Ascending aorta (tissue), 2 donors: ENCODE measurements at regions of chr1 and their contacts with region 1.

Region 1: GRCh38 chr1:153670859-153671627 is at the start of gene ILF2:
- DNase-seq: peak; percentile 90 to 99
- H3K4me3 ChIP-seq: peak within 1 kb of the TSS; percentile 79 to 81
- H3K27ac ChIP-seq: peak within 1 kb of the TSS; percentile 88 to 90
- H3K4me1 ChIP-seq: peaks cover 0 to 8% of the 10 kb centered on the region in 2 donors
- H3K27me3 ChIP-seq: no peaks in the 10 kb centered on the region
- CTCF ChIP-seq: peak in 2 of 3 experiments; percentile 26 to 31
- total RNA-seq, gene ILF2: 37.5 TPM

Region 2: DNA sequence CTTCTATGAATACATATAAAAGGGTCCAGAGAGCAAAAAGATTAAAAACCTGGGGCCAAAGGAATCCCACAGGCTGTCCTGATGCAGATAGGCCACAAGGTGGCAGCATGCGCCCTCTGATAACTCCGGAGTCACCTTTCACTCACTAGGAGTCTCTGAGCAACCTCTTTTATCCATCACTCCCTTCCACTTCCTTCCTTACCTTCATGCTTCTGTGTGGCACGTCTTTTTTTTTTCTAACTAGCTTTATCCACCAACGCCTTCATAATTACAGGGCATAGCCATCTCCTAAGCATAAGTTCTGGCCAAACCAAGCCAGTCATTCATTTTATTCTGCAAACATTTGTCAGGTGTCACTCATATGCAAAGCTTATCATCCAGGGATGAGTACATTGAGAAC is 318.5 kb before region 1 on chr1:
- intact Hi-C with region 1: loop called (anchors 5 kb)
- DNase-seq: peak in 1 of 2 donors; percentile 80
- H3K4me3 ChIP-seq: no peak overlapping the region
- H3K27ac ChIP-seq: no peak overlapping the region
- H3K4me1 ChIP-seq: no peaks in the 10 kb centered on the region
- H3K27me3 ChIP-seq: no peaks in the 10 kb centered on the region
- CTCF ChIP-seq: peak; percentile 82 to 92 (median 84)

Region 3: GRCh38 chr1:153633716-153634665 is 37.1 kb before region 1 on chr1 and contains the start of gene CHTOP:
- intact Hi-C with region 1: loop called (anchors 2 kb)
- DNase-seq: peak; percentile 92 to 99
- H3K4me3 ChIP-seq: peak within 1 kb of the TSS; percentile 71 to 97
- H3K27ac ChIP-seq: peak within 1 kb of the TSS; percentile 97 to 100
- H3K4me1 ChIP-seq: peaks cover 7 to 24% of the 10 kb centered on the region in 2 donors
- H3K27me3 ChIP-seq: no peaks in the 10 kb centered on the region
- CTCF ChIP-seq: no peak
- total RNA-seq, gene CHTOP: 58.9 TPM

Region 4: DNA sequence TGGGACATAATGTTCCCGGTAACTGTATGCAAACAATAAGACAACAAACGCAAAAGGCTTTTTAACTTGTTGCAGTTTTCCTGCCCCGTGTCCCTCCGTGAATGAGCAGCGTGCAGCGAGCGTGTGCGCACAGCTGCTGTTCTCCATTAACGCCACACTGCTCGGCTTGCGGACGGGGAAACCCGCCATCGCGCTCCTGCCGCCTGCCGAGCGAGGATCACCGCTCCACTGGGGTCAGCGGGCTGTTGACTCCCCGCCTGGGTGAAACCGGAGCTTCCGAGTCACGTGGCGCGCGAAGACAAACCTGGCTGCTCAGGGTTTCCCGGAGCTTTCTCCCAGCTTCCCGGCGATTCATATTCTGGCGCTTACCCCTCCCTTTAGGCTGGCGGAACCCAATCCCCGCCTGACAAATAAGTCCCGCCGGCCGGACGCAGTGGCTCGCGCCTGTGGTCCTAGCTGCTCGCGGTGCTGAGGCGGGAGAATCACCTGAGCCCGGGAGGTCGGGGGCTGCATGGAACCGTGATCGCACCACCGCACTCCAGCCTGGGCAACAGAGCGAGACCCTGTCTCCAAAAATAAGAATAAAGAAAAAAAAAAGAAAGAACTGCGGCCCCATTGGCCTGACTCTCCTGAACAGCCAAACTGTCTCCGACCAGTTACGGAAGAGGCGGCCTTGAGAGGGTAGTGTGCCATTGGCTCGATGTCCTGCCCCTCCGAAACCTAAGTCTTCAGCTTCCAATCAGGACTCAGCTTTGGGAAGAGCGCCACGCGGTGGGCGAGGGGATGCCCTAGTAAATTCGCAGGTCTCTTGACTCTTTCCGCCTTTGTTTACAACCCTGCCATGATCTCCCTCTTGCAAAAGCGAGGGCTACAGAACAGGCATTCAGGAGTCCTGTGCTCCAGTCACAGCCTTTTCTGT is 296.3 kb after region 1 on chr1 and contains the start of gene CREB3L4:
- intact Hi-C with region 1: loop called (anchors 5 kb)
- DNase-seq: peak; percentile 73 to 96
- H3K4me3 ChIP-seq: peak within 1 kb of the TSS; percentile 62 to 69
- H3K27ac ChIP-seq: peak within 1 kb of the TSS; percentile 80 to 85
- H3K4me1 ChIP-seq: peaks cover 9 to 20% of the 10 kb centered on the region in 2 donors
- H3K27me3 ChIP-seq: no peaks in the 10 kb centered on the region
- CTCF ChIP-seq: peak; percentile 6 to 43 (median 43)
- total RNA-seq, gene CREB3L4: 6.3 TPM